ENCODE measurements at regions of chr7 and their contacts with region 1.

Region 1: DNA sequence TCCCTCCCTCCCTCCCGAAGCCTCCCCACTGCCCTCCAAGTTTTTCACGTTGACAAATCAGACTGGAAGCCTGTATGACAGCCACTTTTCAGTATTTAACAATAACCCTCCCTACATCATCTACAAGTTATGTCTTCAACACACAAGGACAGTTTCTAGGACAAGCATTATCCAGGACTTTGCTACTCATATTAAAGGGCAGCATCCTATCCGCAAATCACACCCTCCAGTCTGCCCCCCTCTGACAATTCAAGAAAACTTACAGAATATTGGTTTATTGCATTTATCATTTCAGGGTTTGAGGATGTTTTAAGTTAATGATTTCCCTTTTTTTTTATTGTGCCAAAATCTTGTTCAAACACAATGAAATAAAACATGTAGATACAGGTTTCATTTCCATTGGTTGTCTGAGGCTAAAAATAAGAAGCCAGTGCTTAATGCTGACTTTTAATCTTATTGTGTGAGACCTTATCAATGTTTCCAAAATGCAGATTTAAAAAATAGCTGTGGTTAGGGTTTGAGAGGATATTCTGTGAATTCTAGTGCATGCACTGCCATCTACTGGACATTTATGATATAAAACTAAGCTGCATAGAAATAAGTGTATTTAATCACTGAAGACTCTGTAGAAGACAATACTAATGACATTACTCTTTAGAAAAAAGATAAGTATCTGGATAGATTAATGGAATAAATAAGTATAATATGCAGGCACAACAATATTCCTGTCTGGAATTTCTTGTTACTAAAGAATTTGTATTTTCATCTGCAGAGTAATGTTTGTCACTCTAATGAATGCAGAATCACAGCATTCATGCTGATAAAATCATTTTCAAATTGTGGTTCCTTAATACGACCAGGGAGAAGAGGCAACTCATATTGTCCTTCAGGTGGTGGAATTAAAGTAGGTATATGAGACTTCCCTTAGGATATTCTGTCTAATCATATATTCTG is 64.1 kb downstream of the CAV1 start:
- DNase-seq: no peak
- H3K4me3 ChIP-seq: no peak overlapping the region
- H3K27ac ChIP-seq: peak overlapping the region; percentile 68
- H3K4me1 ChIP-seq: peaks cover 47% of the 10 kb centered on the region
- H3K27me3 ChIP-seq: no peaks in the 10 kb centered on the region
- CTCF ChIP-seq: peak; percentile 80

Region 2: GRCh38 chr7:116173051-116174028 is 415.6 kb before region 1 on chr7:
- intact Hi-C with region 1: loop called (anchors 5 kb)
- DNase-seq: no peak
- H3K4me3 ChIP-seq: no peak overlapping the region
- H3K27ac ChIP-seq: no peak overlapping the region
- H3K4me1 ChIP-seq: no peaks in the 10 kb centered on the region
- H3K27me3 ChIP-seq: no peaks in the 10 kb centered on the region
- CTCF ChIP-seq: peak; percentile 66

Region 3: DNA sequence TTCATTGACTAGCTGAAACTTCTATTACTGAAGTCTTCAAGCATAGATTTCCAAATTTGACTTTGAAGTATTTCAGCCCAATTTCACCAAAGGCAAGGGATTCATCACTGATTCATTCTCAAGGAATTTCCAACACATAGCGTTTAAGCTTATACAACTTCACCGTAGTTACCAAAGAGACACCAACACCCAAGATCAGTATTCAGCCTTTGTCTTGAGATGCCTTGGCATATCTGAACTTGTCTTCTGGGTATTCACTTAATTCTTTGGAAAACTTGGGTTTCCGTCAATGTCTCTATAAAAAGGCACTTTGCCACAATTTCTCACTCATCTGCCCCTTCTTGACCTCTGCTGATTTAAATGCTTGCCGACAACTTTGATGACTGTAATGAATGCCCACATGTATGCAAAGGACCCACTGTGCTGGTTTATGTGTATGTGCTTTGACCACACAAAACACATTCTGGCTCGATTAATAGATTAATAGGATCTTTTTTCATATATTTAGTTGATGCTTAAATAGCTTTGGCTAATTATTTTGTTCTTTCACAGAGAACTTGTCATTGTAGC is 329.0 kb before region 1 on chr7:
- intact Hi-C with region 1: loop called (anchors 2 kb)
- DNase-seq: no peak
- H3K4me3 ChIP-seq: no peak overlapping the region
- H3K27ac ChIP-seq: no peak overlapping the region
- H3K4me1 ChIP-seq: peaks cover 9% of the 10 kb centered on the region
- H3K27me3 ChIP-seq: no peaks in the 10 kb centered on the region
- CTCF ChIP-seq: no peak

Region 4: DNA sequence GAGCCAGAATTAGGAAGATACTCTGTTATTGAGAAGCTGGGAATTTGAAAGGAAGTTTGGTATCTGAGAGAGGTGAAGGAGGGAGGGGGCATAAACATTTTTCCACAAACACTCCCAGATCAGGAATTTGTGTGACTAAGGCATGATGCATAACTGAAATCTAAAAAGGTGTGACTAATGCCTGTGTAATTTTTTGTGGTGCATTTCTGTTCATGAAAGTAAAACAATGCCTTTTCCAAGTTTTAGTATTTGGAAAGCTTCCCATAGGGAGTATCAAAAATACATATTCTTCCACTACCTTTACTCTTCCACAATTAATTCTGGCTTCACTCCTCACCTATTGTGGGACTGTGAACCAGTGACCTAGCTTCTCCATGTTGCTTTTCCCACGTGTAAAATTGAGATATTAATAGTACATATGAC is 145.8 kb before region 1 on chr7:
- intact Hi-C with region 1: loop called (anchors 10 kb)
- DNase-seq: no peak
- H3K4me3 ChIP-seq: no peak overlapping the region
- H3K27ac ChIP-seq: peak overlapping the region; percentile 84
- H3K4me1 ChIP-seq: peaks cover 88% of the 10 kb centered on the region
- H3K27me3 ChIP-seq: no peaks in the 10 kb centered on the region
- CTCF ChIP-seq: no peak

Region 5: DNA sequence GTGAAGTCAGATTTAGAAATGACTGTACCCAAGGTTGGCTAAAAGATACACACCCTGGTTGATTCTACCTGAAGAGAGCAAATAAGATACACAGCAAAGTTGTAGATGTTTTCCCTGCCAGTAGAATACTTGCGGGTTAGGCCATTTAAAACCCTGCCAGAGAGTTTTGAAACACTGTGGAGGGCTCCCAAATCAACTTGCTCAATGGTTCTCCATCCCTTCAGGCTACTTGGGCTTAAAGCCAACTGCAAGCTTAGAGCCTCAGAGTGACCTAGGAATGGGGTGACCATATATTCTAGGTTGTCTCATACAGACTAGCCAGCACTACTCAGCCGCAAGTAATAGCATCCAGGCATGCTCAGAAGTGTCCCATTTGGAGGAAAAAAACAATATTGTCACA is 54.1 kb before region 1 on chr7:
- intact Hi-C with region 1: loop called (anchors 5 kb)
- DNase-seq: no peak
- H3K4me3 ChIP-seq: peak overlapping the region; percentile 26
- H3K27ac ChIP-seq: peak overlapping the region; percentile 64
- H3K4me1 ChIP-seq: peaks cover 97% of the 10 kb centered on the region
- H3K27me3 ChIP-seq: no peaks in the 10 kb centered on the region
- CTCF ChIP-seq: no peak

Region 6: GRCh38 chr7:116809636-116810266 is 220.8 kb after region 1 on chr7:
- intact Hi-C with region 1: loop called (anchors 2 kb)
- DNase-seq: no peak
- H3K4me3 ChIP-seq: no peak overlapping the region
- H3K27ac ChIP-seq: no peak overlapping the region
- H3K4me1 ChIP-seq: peaks cover 7% of the 10 kb centered on the region
- H3K27me3 ChIP-seq: no peaks in the 10 kb centered on the region
- CTCF ChIP-seq: peak; percentile 75